ENCODE measurements at regions of chr2 and their contacts with region 1.

Region 1: GRCh38 chr2:74876081-74876886 is 42.4 kb downstream of the HK2 start:
- DNase-seq: peak in 1 of 2 experiments; percentile 57
- H3K4me3 ChIP-seq: no peak overlapping the region
- H3K27ac ChIP-seq: no peak overlapping the region
- H3K4me1 ChIP-seq: peaks cover 0 to 3% (median 0%) of the 10 kb centered on the region in 4 experiments; a peak in 3 of 7 replicates
- H3K27me3 ChIP-seq: no peaks in the 10 kb centered on the region
- CTCF ChIP-seq: peak; percentile 37 to 68 (median 60)
- EP300 ChIP-seq: no peak
- POLR2A ChIP-seq: no peak
- RAD21 ChIP-seq: peak; percentile 76 to 83

Region 2: GRCh38 chr2:74603282-74604000 is 272.8 kb before region 1 on chr2:
- CTCF ChIA-PET with region 1: no interaction called
- POLR2A ChIA-PET with region 1: no interaction called
- DNase-seq: no peak
- H3K4me3 ChIP-seq: no peak overlapping the region
- H3K27ac ChIP-seq: no peak overlapping the region
- H3K4me1 ChIP-seq: no peaks in the 10 kb centered on the region
- H3K27me3 ChIP-seq: peaks cover 0 to 2% (median 0%) of the 10 kb centered on the region in 4 experiments; a peak in 1 of 7 replicates
- CTCF ChIP-seq: no peak
- EP300 ChIP-seq: no peak
- POLR2A ChIP-seq: no peak
- RAD21 ChIP-seq: no peak

Region 3: GRCh38 chr2:74696829-74697228 is 179.5 kb before region 1 on chr2:
- CTCF ChIA-PET with region 1: interaction called, 48 read pairs
- POLR2A ChIA-PET with region 1: no interaction called
- DNase-seq: no peak
- H3K4me3 ChIP-seq: no peak overlapping the region
- H3K27ac ChIP-seq: no peak overlapping the region
- H3K4me1 ChIP-seq: no peaks in the 10 kb centered on the region; a peak in 2 of 7 replicates
- H3K27me3 ChIP-seq: no peaks in the 10 kb centered on the region
- CTCF ChIP-seq: no peak
- EP300 ChIP-seq: no peak
- POLR2A ChIP-seq: no peak
- RAD21 ChIP-seq: no peak

Region 4: GRCh38 chr2:74715078-74715791 is 161.0 kb before region 1 on chr2:
- CTCF ChIA-PET with region 1: interaction called, 79 read pairs
- POLR2A ChIA-PET with region 1: no interaction called
- DNase-seq: peak; percentile 53 to 97
- H3K4me3 ChIP-seq: peak overlapping the region; percentile 40 to 67 (median 56)
- H3K27ac ChIP-seq: no peak overlapping the region
- H3K4me1 ChIP-seq: peaks cover 0 to 4% (median 4%) of the 10 kb centered on the region in 4 experiments; a peak in 4 of 7 replicates
- H3K27me3 ChIP-seq: peaks cover 0 to 11% (median 11%) of the 10 kb centered on the region in 4 experiments; a peak in 6 of 7 replicates
- CTCF ChIP-seq: peak; percentile 88 to 98 (median 89)
- EP300 ChIP-seq: no peak
- POLR2A ChIP-seq: no peak
- RAD21 ChIP-seq: peak; percentile 82 to 85

Region 5: GRCh38 chr2:74764429-74765272 is 111.6 kb before region 1 on chr2:
- CTCF ChIA-PET with region 1: interaction called, 35 read pairs
- POLR2A ChIA-PET with region 1: no interaction called
- DNase-seq: no peak
- H3K4me3 ChIP-seq: no peak overlapping the region
- H3K27ac ChIP-seq: no peak overlapping the region
- H3K4me1 ChIP-seq: peaks cover 0 to 9% (median 4%) of the 10 kb centered on the region in 4 experiments; a peak in 5 of 7 replicates
- H3K27me3 ChIP-seq: no peaks in the 10 kb centered on the region
- CTCF ChIP-seq: no peak
- EP300 ChIP-seq: no peak
- POLR2A ChIP-seq: no peak
- RAD21 ChIP-seq: no peak

Region 6: DNA sequence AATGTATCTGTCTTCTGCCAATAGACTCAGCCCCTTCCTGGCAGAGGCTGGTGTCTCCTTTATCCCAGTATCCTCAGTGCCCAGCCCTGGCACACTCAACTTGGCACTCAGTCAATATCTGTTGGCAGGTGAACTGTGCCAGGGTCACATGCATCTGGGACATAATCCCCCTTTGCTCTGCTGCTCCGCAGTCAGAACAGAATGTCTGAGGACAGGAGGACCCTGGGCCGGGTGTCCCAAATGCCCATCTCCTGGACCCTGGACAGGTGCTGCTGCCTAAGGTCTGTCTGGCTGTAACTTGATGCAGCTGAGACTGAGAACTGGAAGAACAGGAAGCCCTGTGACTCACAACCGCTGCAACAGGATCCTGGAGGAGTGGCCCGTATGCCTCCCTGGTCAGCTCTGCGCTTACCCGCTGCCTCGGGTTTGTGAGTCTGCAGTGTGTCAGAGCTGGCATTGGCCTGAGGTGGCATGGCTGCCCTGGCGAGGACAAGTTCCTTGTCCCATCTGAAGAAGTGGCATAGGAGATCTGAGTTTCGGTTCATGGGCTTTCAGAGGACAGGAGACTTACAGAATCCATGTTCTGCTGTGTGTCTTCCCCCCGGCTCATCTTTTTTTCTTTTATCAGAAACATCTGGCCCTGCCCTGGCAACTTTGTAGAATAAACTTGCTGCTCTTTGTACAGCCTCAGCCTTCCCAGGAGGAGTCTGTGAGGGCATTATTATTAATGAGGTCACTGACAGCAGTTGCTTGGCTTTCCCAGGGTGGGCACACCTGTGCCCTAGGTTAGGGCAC is 30.9 kb before region 1 on chr2:
- CTCF ChIA-PET with region 1: interaction called, 99 read pairs
- POLR2A ChIA-PET with region 1: interaction called, 3 read pairs
- DNase-seq: peak in 1 of 2 experiments; percentile 56
- H3K4me3 ChIP-seq: no peak overlapping the region
- H3K27ac ChIP-seq: no peak overlapping the region
- H3K4me1 ChIP-seq: peaks cover 9 to 57% (median 30%) of the 10 kb centered on the region in 4 experiments
- H3K27me3 ChIP-seq: no peaks in the 10 kb centered on the region
- CTCF ChIP-seq: no peak
- EP300 ChIP-seq: no peak
- POLR2A ChIP-seq: no peak
- RAD21 ChIP-seq: no peak

Region 7: GRCh38 chr2:74864846-74865722 is 11.2 kb before region 1 on chr2:
- CTCF ChIA-PET with region 1: interaction called, 27 read pairs
- POLR2A ChIA-PET with region 1: no interaction called
- DNase-seq: no peak
- H3K4me3 ChIP-seq: no peak overlapping the region
- H3K27ac ChIP-seq: peak overlapping the region; percentile 52; the same call in 1 of the 2 replicates
- H3K4me1 ChIP-seq: peaks cover 0 to 11% (median 7%) of the 10 kb centered on the region in 4 experiments
- H3K27me3 ChIP-seq: no peaks in the 10 kb centered on the region
- CTCF ChIP-seq: peak in 2 of 3 experiments; percentile 3 to 48; a peak in 1 of 4 replicates
- EP300 ChIP-seq: no peak
- POLR2A ChIP-seq: no peak
- RAD21 ChIP-seq: peak in 1 of 2 experiments; percentile 23; a peak in 3 of 4 replicates

Measured in H1 (cell line).